Activated B cell treated with CpG ODN at 0.5 μM for 24 hours (primary cell): ENCODE measurements at regions of chr3 and their contacts with region 1.

Region 1: DNA sequence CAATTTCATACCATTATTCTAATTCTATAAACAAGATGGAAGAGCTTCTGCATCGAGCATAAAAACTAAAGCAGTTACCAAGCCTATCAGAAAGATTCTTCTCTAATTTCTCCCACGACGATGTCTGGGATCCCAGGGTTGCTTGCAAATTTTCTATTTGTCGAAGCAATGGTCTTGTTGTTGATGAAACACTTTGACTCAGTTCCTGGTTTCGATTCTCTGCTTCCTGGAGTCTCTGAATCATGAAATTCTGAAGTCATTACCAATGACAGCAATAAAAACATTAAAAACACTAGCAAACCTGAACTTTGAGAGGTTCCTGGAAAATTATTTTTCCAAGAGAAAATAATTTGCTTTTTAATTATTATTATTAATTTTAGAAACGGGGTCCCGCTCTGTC is 18.7 kb downstream of the TMF1 start:
- DNase-seq: no peak
- ATAC-seq: no peak
- H3K4me3 Mint-ChIP-seq: no peak overlapping the region
- H3K27ac Mint-ChIP-seq: no peak overlapping the region
- H3K4me1 Mint-ChIP-seq: no peaks in the 10 kb centered on the region
- H3K27me3 Mint-ChIP-seq: no peaks in the 10 kb centered on the region
- CTCF ChIP-seq: no peak

Region 2: DNA sequence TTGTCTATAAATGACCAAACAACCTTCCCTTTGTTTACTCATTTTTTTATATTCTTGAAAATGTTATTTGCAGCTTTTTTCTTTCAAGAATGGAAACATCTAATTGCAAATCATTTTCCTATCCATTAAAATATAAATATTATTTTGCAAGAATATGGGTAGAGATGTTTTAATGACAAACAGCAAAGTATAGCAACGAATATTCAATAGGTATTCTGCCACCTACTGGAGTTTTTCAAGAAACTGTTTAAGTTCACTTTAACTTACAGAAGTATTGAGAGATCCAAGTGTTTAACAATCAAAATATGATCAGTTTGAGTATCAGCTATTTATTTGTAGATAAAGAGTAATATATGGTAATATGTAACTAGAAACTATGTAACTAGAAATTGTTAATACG is 13.0 kb before region 1 on chr3:
- CTCF ChIA-PET with region 1: interaction called, 3 read pairs
- POLR2A ChIA-PET with region 1: interaction called, 3 read pairs
- intact Hi-C with region 1: loop called (anchors 2 kb)
- DNase-seq: no peak
- ATAC-seq: no peak
- H3K4me3 Mint-ChIP-seq: no peak overlapping the region
- H3K27ac Mint-ChIP-seq: no peak overlapping the region
- H3K4me1 Mint-ChIP-seq: no peaks in the 10 kb centered on the region
- H3K27me3 Mint-ChIP-seq: no peaks in the 10 kb centered on the region
- CTCF ChIP-seq: no peak